Panc1 (cell line): ENCODE measurements at regions of chr15 and their contacts with region 1.

Region 1: GRCh38 chr15:74036271-74037170 is 42.0 kb downstream of the PML start:
- DNase-seq: no peak
- ATAC-seq: peak; percentile 79
- H3K4me3 ChIP-seq: no peak overlapping the region
- H3K27ac ChIP-seq: no peak overlapping the region
- H3K4me1 ChIP-seq: no peaks in the 10 kb centered on the region
- H3K27me3 ChIP-seq: no peaks in the 10 kb centered on the region
- CTCF ChIP-seq: peak; percentile 81; the same call in 1 of the 2 replicates

Region 2: DNA sequence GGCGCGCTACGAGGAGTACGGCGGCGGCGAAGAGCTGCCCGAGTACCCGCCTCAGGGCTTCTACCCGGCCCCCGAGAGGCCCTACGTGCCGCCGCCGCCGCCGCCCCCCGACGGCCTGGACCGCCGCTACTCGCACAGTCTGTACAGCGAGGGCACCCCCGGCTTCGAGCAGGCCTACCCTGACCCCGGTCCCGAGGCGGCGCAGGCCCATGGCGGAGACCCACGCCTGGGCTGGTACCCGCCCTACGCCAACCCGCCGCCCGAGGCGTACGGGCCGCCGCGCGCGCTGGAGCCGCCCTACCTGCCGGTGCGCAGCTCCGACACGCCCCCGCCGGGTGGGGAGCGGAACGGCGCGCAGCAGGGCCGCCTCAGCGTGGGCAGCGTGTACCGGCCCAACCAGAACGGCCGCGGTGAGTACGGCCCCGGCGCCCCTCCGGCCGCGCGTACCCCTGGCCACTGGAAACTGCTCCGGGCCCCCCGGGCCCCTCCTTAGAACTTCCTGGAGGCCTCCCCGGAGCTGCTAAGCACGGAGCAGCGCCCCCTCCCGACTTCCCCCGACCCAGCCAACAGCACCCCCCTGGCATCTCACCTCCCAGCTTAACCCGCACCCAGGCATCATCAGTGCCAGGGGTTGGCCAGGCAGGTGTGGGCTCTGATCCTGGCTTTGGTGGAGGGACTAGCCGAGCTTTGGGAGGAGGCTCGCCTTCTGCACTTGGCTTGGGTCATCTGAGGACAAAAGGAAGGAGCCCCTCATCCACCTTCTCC is 108.9 kb before region 1 on chr15:
- CTCF ChIA-PET with region 1: no interaction called
- POLR2A ChIA-PET with region 1: no interaction called
- in situ Hi-C with region 1: no loop called
- intact Hi-C with region 1: no loop called
- DNase-seq: no peak
- ATAC-seq: peak; percentile 78
- H3K4me3 ChIP-seq: peak overlapping the region; percentile 43 to 60
- H3K27ac ChIP-seq: no peak overlapping the region; the same call in 1 of the 2 replicates
- H3K4me1 ChIP-seq: peaks cover 24% of the 10 kb centered on the region
- H3K27me3 ChIP-seq: no peaks in the 10 kb centered on the region
- CTCF ChIP-seq: peak; percentile 90

Region 3: GRCh38 chr15:74019734-74020133 is 16.8 kb before region 1 on chr15:
- CTCF ChIA-PET with region 1: interaction called, 3 read pairs
- POLR2A ChIA-PET with region 1: interaction called, 10 read pairs
- in situ Hi-C with region 1: no loop called
- intact Hi-C with region 1: no loop called
- DNase-seq: no peak
- ATAC-seq: no peak
- H3K4me3 ChIP-seq: no peak overlapping the region
- H3K27ac ChIP-seq: no peak overlapping the region
- H3K4me1 ChIP-seq: no peaks in the 10 kb centered on the region
- H3K27me3 ChIP-seq: no peaks in the 10 kb centered on the region
- CTCF ChIP-seq: no peak